ENCODE measurements at regions of chr10 and their contacts with region 1.

Region 1: GRCh38 chr10:20768843-20769242 is 128.3 kb downstream of the NEBL start:
- DNase-seq: peak; percentile 11
- H3K4me3 ChIP-seq: no peak overlapping the region
- H3K27ac ChIP-seq: no peak overlapping the region
- H3K4me1 ChIP-seq: peaks cover 6% of the 10 kb centered on the region
- H3K27me3 ChIP-seq: peaks cover under 1% of the 10 kb centered on the region
- CTCF ChIP-seq: peak; percentile 28 to 48

Region 2: GRCh38 chr10:18793951-18794350 is 1974.9 kb before region 1 on chr10:
- CTCF ChIA-PET with region 1: no interaction called
- dilution Hi-C with region 1: no loop called
- in situ Hi-C with region 1: no loop called
- intact Hi-C with region 1: loop called (anchors 5 kb)
- DNase-seq: peak; percentile 14
- H3K4me3 ChIP-seq: no peak overlapping the region
- H3K27ac ChIP-seq: no peak overlapping the region
- H3K4me1 ChIP-seq: no peaks in the 10 kb centered on the region
- H3K27me3 ChIP-seq: no peaks in the 10 kb centered on the region
- CTCF ChIP-seq: peak; percentile 12 to 49

Region 3: DNA sequence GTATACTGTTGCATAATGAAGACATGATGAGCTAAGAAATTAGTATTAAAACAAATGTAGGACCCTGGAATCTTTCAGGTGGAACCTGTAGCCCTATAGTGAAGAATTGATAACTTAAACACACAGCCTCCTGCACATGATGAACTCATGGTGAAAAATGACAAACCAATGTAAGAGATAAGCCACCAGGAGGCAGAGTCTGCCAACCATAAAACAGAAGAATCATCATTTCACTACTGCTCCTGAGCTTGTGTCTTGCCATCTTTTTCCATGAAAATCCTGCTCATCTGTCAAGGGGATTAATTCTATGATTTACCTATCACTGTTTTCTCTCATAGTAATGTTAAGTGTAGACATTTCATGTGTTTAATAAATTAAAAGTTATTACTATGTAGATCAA is 1356.3 kb before region 1 on chr10:
- CTCF ChIA-PET with region 1: interaction called, 4 read pairs
- dilution Hi-C with region 1: no loop called
- in situ Hi-C with region 1: loop called in 1 of 2 experiments (anchors 25 kb)
- intact Hi-C with region 1: loop called (anchors 2 kb)
- DNase-seq: peak; percentile 19
- H3K4me3 ChIP-seq: no peak overlapping the region
- H3K27ac ChIP-seq: no peak overlapping the region
- H3K4me1 ChIP-seq: no peaks in the 10 kb centered on the region
- H3K27me3 ChIP-seq: no peaks in the 10 kb centered on the region
- CTCF ChIP-seq: peak; percentile 42 to 59

Region 4: GRCh38 chr10:19620811-19621210 is 1148.0 kb before region 1 on chr10:
- CTCF ChIA-PET with region 1: no interaction called
- dilution Hi-C with region 1: no loop called
- in situ Hi-C with region 1: no loop called
- intact Hi-C with region 1: loop called (anchors 1 kb)
- DNase-seq: no peak
- H3K4me3 ChIP-seq: no peak overlapping the region
- H3K27ac ChIP-seq: no peak overlapping the region
- H3K4me1 ChIP-seq: no peaks in the 10 kb centered on the region
- H3K27me3 ChIP-seq: no peaks in the 10 kb centered on the region
- CTCF ChIP-seq: no peak

Region 5: DNA sequence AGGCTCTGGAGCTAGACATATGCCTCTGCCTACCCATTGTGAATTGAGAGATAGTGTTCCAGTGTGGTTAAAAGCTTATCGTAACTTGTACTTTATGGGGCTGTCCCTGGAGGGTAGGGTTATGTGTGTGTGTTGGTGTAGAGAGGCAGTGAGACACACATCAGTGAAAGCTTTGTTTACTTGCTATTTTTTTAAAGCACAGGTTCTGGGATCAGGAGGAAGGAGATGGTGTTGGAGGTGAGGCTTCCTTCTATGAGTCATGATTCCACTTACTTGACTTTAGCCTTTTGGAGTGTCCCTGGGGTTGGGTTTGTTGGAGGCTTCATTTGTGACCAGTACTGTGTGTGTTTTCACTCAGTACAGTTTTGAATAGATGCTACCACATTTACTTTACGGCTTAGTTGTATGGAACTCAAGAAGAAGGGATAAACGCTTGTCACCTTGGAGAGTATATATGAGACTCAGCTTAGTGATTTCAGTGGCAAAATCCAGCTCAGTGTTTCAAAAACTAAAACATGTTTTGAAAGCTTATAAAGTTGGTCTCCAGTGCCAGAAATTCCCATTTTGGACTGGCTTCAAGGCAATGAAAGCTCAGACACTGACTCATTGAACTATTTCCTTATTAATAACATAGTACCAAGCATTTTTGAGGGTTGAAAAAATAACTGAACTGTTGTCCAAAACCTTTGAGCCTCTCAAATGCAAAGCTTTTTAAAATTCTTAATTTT is 846.4 kb before region 1 on chr10:
- CTCF ChIA-PET with region 1: no interaction called
- dilution Hi-C with region 1: no loop called
- in situ Hi-C with region 1: no loop called
- intact Hi-C with region 1: loop called (anchors 5 kb)
- DNase-seq: peak; percentile 91
- H3K4me3 ChIP-seq: no peak overlapping the region
- H3K27ac ChIP-seq: peak overlapping the region; percentile 91
- H3K4me1 ChIP-seq: peaks cover 51% of the 10 kb centered on the region
- H3K27me3 ChIP-seq: no peaks in the 10 kb centered on the region
- CTCF ChIP-seq: no peak

Region 6: GRCh38 chr10:21318540-21319167 is 549.8 kb after region 1 on chr10:
- CTCF ChIA-PET with region 1: no interaction called
- dilution Hi-C with region 1: no loop called
- in situ Hi-C with region 1: no loop called
- intact Hi-C with region 1: no loop called
- DNase-seq: no peak
- H3K4me3 ChIP-seq: no peak overlapping the region
- H3K27ac ChIP-seq: no peak overlapping the region
- H3K4me1 ChIP-seq: peaks cover 26% of the 10 kb centered on the region
- H3K27me3 ChIP-seq: no peaks in the 10 kb centered on the region
- CTCF ChIP-seq: no peak